PC-3 (cell line): ENCODE measurements at regions of chr12 and their contacts with region 1.

Region 1: DNA sequence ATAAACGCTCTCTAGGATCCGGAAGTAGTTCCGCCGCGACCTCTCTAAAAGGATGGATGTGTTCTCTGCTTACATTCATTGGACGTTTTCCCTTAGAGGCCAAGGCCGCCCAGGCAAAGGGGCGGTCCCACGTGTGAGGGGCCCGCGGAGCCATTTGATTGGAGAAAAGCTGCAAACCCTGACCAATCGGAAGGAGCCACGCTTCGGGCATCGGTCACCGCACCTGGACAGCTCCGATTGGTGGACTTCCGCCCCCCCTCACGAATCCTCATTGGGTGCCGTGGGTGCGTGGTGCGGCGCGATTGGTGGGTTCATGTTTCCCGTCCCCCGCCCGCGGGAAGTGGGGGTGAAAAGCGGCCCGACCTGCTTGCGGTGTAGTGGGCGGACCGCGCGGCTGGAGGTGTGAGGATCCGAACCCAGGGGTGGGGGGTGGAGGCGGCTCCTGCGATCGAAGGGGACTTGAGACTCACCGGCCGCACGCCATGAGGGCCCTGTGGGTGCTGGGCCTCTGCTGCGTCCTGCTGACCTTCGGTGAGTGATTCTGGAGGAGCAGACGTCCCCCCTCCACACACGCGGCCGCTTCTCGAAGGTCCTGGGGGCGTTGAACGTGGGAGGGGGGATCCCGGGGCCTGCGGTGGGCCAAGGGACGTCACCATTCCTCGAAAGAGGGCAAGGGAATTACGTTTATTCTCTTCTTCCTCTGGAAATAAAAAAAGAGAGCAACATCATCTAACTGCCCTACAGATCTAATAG is at the start of gene HSP90B1:
- DNase-seq: peak; percentile 100
- ATAC-seq: peak; percentile 74
- H3K4me3 ChIP-seq: peak within 1 kb of the TSS; percentile 92
- H3K27ac ChIP-seq: peak within 1 kb of the TSS; percentile 78
- H3K4me1 ChIP-seq: peaks cover 43% of the 10 kb centered on the region
- H3K27me3 ChIP-seq: no peaks in the 10 kb centered on the region
- CTCF ChIP-seq: no peak
- total RNA-seq, gene HSP90B1: 476 and 593 TPM in 2 replicates

Region 2: DNA sequence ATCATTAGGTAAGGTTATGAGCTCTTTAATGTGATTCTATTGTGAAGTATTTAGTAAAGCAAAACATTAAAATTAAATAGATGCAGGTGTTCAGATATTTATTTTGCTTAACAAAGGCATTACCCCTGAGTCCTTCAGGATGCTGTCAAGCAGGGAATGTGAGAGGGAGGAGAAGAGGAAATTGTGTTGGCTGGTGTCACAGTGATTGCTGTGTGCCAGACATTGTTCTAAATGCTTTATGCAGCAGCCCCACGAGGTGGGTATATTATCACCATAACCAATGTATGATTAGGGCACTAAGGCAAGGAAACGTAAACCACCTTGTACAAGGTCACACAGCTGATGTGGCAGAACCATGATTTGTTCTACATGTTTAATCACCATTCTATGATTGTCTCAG is 263.1 kb before region 1 on chr12:
- CTCF ChIA-PET with region 1: no interaction called
- POLR2A ChIA-PET with region 1: no interaction called
- intact Hi-C with region 1: no loop called
- DNase-seq: no peak
- ATAC-seq: no peak
- H3K4me3 ChIP-seq: no peak overlapping the region
- H3K27ac ChIP-seq: no peak overlapping the region
- H3K4me1 ChIP-seq: no peaks in the 10 kb centered on the region
- H3K27me3 ChIP-seq: peaks cover 49% of the 10 kb centered on the region
- CTCF ChIP-seq: no peak

Region 3: GRCh38 chr12:103840876-103841689 is 89.1 kb before region 1 on chr12 and contains the start of gene NT5DC3:
- CTCF ChIA-PET with region 1: no interaction called
- POLR2A ChIA-PET with region 1: interaction called, 5 read pairs
- intact Hi-C with region 1: loop called (anchors 1 kb)
- DNase-seq: peak; percentile 89
- ATAC-seq: peak; percentile 69
- H3K4me3 ChIP-seq: peak within 1 kb of the TSS; percentile 93
- H3K27ac ChIP-seq: peak within 1 kb of the TSS; percentile 92
- H3K4me1 ChIP-seq: peaks cover 31% of the 10 kb centered on the region
- H3K27me3 ChIP-seq: no peaks in the 10 kb centered on the region
- CTCF ChIP-seq: no peak
- total RNA-seq, gene NT5DC3: 14.9 and 15.7 TPM in 2 replicates

Region 4: GRCh38 chr12:103884316-103884715 is 45.9 kb before region 1 on chr12:
- CTCF ChIA-PET with region 1: interaction called, 3 read pairs
- POLR2A ChIA-PET with region 1: interaction called, 4 read pairs
- intact Hi-C with region 1: loop called (anchors 1 kb)
- DNase-seq: peak; percentile 60
- ATAC-seq: no peak
- H3K4me3 ChIP-seq: no peak overlapping the region
- H3K27ac ChIP-seq: no peak overlapping the region
- H3K4me1 ChIP-seq: peaks cover 29% of the 10 kb centered on the region
- H3K27me3 ChIP-seq: no peaks in the 10 kb centered on the region
- CTCF ChIP-seq: peak; percentile 83

Region 5: DNA sequence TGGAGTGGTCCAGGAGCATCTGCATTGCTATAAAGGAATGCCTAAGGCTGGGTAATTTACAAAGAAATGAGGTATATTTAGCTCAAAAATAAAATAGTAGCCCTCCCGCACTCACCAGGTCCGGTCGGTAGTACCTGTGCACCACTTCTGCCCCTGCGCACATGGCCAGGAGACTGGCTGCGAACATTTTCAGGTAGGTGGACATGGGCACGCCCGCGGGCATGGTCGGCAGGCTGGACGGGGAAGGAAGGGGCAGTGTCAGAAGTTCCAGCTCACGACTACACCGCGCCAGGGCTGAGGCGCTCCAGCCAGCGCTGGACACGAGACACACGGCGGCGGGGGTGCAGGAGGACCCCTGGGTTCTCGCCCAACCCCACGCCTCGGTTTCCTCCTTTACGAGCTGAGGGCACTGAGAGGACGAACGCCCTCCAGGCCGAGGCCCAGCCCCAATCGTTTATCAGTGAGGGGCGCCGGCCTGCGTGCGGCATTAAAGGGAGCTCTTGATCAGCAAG is 26.4 kb after region 1 on chr12:
- CTCF ChIA-PET with region 1: interaction called, 4 read pairs
- POLR2A ChIA-PET with region 1: interaction called, 3 read pairs
- intact Hi-C with region 1: loop called (anchors 1 kb)
- DNase-seq: peak; percentile 34
- ATAC-seq: peak; percentile 41
- H3K4me3 ChIP-seq: peak overlapping the region; percentile 74
- H3K27ac ChIP-seq: peak overlapping the region; percentile 91
- H3K4me1 ChIP-seq: peaks cover 24% of the 10 kb centered on the region
- H3K27me3 ChIP-seq: no peaks in the 10 kb centered on the region
- CTCF ChIP-seq: no peak

Region 6: DNA sequence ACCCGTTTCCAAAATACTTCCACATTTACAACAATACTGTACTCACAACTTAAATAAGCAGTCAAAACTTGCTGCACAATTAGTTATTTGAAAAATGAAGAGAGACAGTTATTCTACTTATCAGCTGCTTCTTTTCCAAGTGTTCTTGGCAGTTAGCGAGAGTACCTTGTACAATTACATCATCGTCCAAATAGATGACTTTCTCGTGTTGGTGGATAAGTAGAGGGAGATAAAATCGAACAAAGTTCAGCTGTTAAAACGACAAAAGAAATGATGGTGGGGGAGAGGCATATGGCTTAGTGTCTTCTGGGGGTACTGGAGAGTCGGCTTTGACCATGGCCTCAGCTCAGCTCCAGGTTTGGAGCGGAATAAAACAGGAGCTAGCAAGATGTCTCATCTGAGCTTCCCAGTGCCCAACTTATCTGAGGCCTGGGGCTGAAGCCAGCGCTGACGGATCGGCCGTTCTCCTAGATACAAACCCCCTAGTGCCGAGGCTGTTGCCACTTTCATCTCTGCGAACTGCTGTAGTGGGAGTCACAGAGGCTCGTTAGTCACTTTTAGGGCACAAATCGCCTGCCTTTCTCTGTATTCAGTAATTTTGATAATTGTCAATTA is 67.2 kb after region 1 on chr12:
- CTCF ChIA-PET with region 1: no interaction called
- POLR2A ChIA-PET with region 1: no interaction called
- intact Hi-C with region 1: no loop called
- DNase-seq: no peak
- ATAC-seq: no peak
- H3K4me3 ChIP-seq: no peak overlapping the region
- H3K27ac ChIP-seq: no peak overlapping the region
- H3K4me1 ChIP-seq: no peaks in the 10 kb centered on the region
- H3K27me3 ChIP-seq: no peaks in the 10 kb centered on the region
- CTCF ChIP-seq: no peak